Activated CD4-positive, alpha-beta T cell treated with anti-CD3 and anti-CD28 coated beads for 36 hours (primary cell): ENCODE measurements at regions of chr7 and their contacts with region 1.

Region 1: DNA sequence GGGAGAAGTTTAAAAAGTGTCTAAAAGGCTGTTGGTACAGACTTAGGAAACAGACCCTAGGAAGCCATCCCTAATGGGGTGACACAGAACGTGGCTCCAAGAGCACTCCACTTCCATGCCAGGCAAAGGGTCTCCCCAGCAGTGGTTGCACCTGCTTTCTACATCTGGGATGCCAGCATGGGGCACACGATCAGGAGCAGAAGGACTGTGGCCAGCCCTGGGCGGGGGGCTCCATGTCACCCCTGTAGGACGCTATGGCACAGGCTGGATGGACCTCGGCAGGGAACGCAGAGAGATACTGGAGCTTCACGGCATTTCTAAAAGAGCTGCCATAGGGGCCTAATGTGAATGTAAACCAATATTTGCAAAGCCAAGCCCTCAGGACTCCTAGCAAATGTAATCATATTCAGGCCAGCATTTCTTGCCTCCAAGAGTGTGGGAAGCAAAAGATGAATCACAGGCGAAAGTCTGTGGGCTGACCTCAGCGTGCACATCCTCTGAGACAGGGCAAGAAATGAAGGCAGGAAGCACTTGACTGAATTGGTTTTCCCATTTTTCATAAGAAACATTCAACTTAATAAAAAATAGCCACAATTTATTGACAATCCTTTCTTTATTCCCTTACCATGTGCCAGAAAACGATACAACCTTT is 93.9 kb downstream of the ATXN7L1 start:
- DNase-seq: peak; percentile 73
- ATAC-seq: peak; percentile 96
- H3K4me3 Mint-ChIP-seq: no peak overlapping the region
- H3K27ac Mint-ChIP-seq: no peak overlapping the region
- H3K4me1 Mint-ChIP-seq: peaks cover 12% of the 10 kb centered on the region
- H3K27me3 Mint-ChIP-seq: no peaks in the 10 kb centered on the region

Region 2: DNA sequence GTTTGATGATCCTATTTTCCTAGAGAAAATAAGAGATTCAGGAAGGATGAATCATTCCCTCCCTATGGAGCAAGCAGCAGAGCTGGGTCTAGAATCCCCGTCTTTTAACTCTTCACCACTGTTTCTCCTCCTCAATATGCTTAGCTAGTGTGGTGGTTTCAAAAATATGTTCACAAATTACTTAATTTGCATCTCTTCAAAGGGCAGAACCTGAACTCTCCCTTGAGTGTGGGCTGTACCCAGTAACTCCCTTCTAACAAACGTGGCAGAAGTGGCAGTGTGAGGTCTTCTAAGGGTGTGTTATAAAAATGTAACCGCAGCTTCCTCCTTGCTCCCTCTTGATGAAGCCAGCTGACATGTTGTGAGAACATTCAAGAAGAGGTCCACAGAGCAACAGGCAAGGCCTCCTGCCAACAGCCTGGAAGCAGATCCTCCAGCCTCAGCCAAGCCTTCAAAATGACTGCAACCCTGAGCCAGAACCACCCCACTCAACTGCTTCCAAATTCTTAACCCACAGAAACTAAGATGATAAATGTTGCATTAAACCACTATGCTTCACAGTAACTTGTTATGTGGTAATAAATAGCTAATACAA is 430.4 kb before region 1 on chr7:
- CTCF ChIA-PET with region 1: no interaction called
- POLR2A ChIA-PET with region 1: no interaction called
- intact Hi-C with region 1: no loop called
- DNase-seq: peak; percentile 63
- ATAC-seq: peak; percentile 92
- H3K4me3 Mint-ChIP-seq: peak overlapping the region; percentile 15
- H3K27ac Mint-ChIP-seq: peak overlapping the region; percentile 91
- H3K4me1 Mint-ChIP-seq: peaks cover 71% of the 10 kb centered on the region
- H3K27me3 Mint-ChIP-seq: no peaks in the 10 kb centered on the region

Region 3: GRCh38 chr7:105795390-105795729 is 12.8 kb after region 1 on chr7:
- CTCF ChIA-PET with region 1: interaction called, 14 read pairs
- POLR2A ChIA-PET with region 1: no interaction called
- intact Hi-C with region 1: no loop called
- DNase-seq: no peak
- ATAC-seq: no peak
- H3K4me3 Mint-ChIP-seq: no peak overlapping the region
- H3K27ac Mint-ChIP-seq: no peak overlapping the region
- H3K4me1 Mint-ChIP-seq: peaks cover 23% of the 10 kb centered on the region
- H3K27me3 Mint-ChIP-seq: no peaks in the 10 kb centered on the region

Region 4: GRCh38 chr7:105885387-105886111 is 103.0 kb after region 1 on chr7:
- CTCF ChIA-PET with region 1: no interaction called
- POLR2A ChIA-PET with region 1: no interaction called
- intact Hi-C with region 1: no loop called
- DNase-seq: peak; percentile 21
- ATAC-seq: no peak
- H3K4me3 Mint-ChIP-seq: no peak overlapping the region
- H3K27ac Mint-ChIP-seq: no peak overlapping the region
- H3K4me1 Mint-ChIP-seq: peaks cover 28% of the 10 kb centered on the region
- H3K27me3 Mint-ChIP-seq: no peaks in the 10 kb centered on the region